Uterus (tissue), 4 donors: ENCODE measurements at regions of chr16 and their contacts with region 1.

Region 1: GRCh38 chr16:17369421-17370222 is 101.1 kb downstream of the XYLT1 start:
- DNase-seq: peak in 1 of 2 donors; percentile 35
- H3K4me3 ChIP-seq: no peak overlapping the region
- H3K27ac ChIP-seq: peak overlapping the region in 1 of 2 donors; percentile 16
- H3K4me1 ChIP-seq: peaks cover 0 to 5% of the 10 kb centered on the region in 2 donors
- H3K27me3 ChIP-seq: no peaks in the 10 kb centered on the region
- CTCF ChIP-seq: no peak
- POLR2A ChIP-seq: no peak

Region 2: GRCh38 chr16:17313085-17313611 is 56.5 kb before region 1 on chr16:
- intact Hi-C with region 1: no loop called
- DNase-seq: peak; percentile 85 to 90
- H3K4me3 ChIP-seq: no peak overlapping the region
- H3K27ac ChIP-seq: peak overlapping the region; percentile 87 to 88
- H3K4me1 ChIP-seq: peaks cover 0 to 6% of the 10 kb centered on the region in 2 donors
- H3K27me3 ChIP-seq: no peaks in the 10 kb centered on the region
- CTCF ChIP-seq: no peak
- POLR2A ChIP-seq: no peak

Region 3: GRCh38 chr16:17467923-17468540 is 98.4 kb after region 1 on chr16:
- intact Hi-C with region 1: loop called (anchors 10 kb)
- DNase-seq: peak; percentile 75 to 84
- H3K4me3 ChIP-seq: peak overlapping the region; percentile 54 to 66
- H3K27ac ChIP-seq: peak overlapping the region in 1 of 2 donors; percentile 2
- H3K4me1 ChIP-seq: no peaks in the 10 kb centered on the region
- H3K27me3 ChIP-seq: no peaks in the 10 kb centered on the region
- CTCF ChIP-seq: peak; percentile 61 to 70 (median 70)
- POLR2A ChIP-seq: no peak

Region 4: DNA sequence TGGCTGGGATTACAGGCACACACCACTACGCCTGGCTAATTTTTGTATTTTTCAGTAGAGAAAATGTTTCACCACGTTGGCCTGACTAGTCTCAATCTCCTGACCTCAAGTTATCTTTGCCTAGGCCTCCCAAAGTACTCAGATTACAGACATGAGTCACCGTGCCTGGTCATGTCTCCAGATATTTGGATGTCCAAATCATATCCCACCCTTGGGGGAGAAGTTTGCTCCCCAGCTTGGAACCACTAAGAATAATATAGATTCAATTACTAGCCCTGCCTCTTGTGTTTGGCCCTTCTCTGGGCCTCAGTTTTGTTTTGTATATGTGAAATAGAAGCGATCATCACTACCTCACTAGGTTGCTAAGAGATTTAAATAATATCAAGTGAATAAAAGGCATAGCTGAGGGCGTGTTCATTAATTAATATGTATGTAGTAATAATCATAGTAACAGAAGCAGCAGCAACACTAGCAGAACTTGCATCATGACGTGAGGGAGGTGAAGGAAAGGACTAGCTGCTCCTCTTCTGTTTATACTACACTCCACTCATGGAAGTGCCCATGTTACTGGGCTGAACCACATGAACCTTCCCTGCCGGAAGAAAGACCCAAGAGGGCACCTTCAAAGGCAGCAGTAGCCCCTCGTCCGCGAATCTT is 354.7 kb after region 1 on chr16:
- intact Hi-C with region 1: no loop called
- DNase-seq: no peak
- H3K4me3 ChIP-seq: no peak overlapping the region
- H3K27ac ChIP-seq: no peak overlapping the region
- H3K4me1 ChIP-seq: no peaks in the 10 kb centered on the region
- H3K27me3 ChIP-seq: no peaks in the 10 kb centered on the region
- CTCF ChIP-seq: no peak
- POLR2A ChIP-seq: no peak

Region 5: DNA sequence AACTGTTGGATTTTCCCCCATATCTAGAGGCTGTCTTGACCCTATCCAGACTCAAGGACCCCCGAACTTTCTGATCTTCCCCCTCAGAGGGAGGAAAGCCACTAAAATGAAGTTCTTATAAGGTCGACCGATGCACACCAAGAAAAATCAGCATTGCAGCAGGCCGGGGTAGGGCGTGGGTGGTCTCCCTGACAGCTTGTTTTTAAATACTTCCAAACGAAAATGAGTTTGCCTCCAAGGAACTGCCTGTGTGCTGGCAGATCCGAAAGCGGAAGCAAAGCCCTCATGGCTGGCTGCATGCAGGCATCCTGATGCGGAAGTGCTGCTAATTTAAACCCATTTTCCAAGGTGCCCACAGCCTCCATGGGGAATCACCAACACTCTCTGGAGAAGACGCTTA is 475.4 kb after region 1 on chr16:
- intact Hi-C with region 1: no loop called
- DNase-seq: no peak
- H3K4me3 ChIP-seq: no peak overlapping the region
- H3K27ac ChIP-seq: no peak overlapping the region
- H3K4me1 ChIP-seq: no peaks in the 10 kb centered on the region
- H3K27me3 ChIP-seq: no peaks in the 10 kb centered on the region
- CTCF ChIP-seq: no peak
- POLR2A ChIP-seq: no peak